ENCODE measurements at regions of chr9 and their contacts with region 1.

Region 1: DNA sequence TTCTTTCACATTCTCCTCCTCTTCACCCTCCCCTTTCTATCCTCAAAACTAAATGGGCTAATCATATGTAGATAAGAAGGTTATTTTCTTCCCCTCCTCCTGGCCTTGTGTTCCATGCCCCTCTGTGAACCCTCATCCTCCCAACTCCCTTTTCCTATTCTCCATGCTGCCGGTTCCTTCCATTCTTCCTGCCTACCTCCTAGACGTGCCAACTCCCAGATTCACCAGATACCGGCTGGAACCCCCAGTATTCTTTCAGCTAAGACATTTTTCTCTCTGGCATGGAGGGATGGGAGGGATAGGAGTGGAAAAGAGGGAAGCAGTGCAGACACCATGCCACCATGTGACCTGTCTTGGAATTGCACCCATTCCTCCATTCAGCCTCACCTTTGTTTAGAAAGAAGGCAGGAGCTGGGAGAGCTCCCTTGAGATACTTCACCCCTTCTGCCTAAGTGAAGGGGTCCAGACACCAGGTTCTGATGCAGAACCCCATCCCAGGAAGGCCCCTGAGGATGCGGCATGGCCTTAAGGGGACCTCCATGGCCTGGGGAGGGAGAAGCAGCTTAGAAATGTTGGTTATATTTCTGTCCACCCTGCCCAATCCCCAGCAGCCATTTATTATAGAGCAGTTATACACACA is 4.8 kb downstream of the DNAJB5 start:
- DNase-seq: no peak
- H3K4me3 ChIP-seq: peak overlapping the region in 1 of 2 donors; percentile 30
- H3K27ac ChIP-seq: peak overlapping the region; percentile 93 to 100
- H3K4me1 ChIP-seq: peaks cover 0 to 65% (median 50%) of the 10 kb centered on the region in 4 donors
- H3K27me3 ChIP-seq: no peaks in the 10 kb centered on the region
- CTCF ChIP-seq: peak; percentile 41 to 59

Region 2: DNA sequence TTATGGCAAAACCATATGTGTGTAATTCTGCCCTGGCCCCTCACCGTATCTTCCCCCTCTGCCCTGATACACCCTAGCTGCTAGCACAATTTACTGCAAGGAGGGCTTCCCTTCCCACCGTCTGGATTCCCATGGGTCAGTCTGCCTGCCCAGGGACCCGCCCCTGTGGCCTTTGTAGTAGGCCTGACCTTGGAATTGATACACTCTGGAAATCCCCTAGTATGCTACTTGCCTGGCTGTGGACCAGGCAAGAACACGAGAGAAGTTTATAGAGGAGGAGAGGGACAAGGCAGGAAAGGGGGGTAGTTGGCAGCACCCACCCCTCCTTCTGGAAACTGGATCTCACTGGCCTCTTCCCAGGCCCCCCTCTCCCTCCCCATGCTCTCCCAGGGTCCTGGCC is 168.6 kb before region 1 on chr9:
- intact Hi-C with region 1: no loop called
- DNase-seq: no peak
- H3K4me3 ChIP-seq: no peak overlapping the region
- H3K27ac ChIP-seq: no peak overlapping the region
- H3K4me1 ChIP-seq: no peaks in the 10 kb centered on the region
- H3K27me3 ChIP-seq: peaks cover 0 to 4% of the 10 kb centered on the region in 2 donors
- CTCF ChIP-seq: no peak

Region 3: DNA sequence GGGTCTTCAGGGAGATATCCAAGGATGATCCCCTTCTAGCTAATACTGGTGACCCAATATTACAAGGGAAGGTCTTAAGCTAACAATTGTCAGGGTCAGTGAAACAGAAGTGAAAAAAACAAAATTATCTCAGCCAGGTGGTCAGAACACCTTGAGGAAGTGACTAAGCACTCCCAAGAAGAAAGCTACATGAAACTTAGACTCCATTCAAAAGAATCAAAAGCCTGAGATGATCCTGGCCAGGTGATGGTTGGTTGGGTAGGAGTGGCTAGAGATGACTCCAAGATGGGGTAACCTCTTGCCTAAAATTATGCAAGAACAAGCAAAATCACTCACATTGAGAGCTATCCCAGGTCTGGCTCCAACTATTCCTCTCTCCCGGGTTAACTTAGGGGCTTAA is 72.7 kb after region 1 on chr9:
- intact Hi-C with region 1: loop called (anchors 5 kb)
- DNase-seq: peak in 1 of 2 donors; percentile 2
- H3K4me3 ChIP-seq: no peak overlapping the region
- H3K27ac ChIP-seq: no peak overlapping the region
- H3K4me1 ChIP-seq: peaks cover 0 to 42% (median 32%) of the 10 kb centered on the region in 4 donors
- H3K27me3 ChIP-seq: no peaks in the 10 kb centered on the region
- CTCF ChIP-seq: no peak

Region 4: DNA sequence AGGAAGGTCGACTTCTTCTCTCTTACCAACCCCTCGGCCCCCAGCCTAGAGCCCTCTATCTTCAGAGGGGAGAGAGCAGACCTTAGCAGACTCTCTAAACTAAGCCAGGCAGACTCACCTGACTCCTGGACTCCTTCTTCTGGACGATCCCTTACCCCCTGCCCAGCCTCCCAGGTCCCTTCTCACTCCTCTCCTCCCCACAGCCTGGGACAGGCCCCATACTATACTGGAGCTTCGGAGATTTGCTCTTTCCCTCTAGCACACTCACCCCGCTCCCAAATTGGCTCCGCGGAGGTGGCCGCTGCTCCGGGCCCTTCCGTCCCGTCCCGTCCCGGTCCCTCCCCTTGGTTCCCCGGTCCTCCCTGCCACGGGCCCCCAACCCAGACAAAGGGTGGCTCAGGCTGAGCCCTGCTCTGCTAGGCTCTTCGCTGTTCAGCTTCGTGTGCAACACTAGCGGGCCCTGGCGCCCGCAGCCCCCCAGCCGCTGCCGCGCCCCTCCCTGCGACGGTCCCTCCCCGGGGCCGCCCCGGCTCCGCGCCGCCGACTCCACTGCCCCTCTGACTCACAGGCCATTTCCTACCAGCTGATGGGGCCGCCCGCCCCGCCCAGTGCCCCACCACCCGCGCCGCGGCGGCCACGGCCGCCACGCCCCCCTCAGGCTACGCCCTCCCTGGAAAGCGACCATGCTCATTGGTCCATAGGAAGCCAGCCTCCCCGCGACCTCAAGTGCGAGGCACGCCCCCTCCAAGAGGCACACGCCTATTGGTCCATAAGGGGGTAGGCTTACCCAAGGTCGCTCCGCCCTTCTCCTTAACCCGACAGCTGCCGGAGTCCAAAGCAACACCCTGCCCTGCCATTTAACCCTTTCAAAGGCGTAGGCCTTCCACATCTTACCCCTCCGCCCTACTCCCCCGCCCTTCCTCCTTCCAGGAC is 116.9 kb after region 1 on chr9:
- intact Hi-C with region 1: loop called (anchors 5 kb)
- DNase-seq: peak; percentile 99
- H3K4me3 ChIP-seq: peak overlapping the region; percentile 79 to 87
- H3K27ac ChIP-seq: peak overlapping the region; percentile 97 to 100
- H3K4me1 ChIP-seq: peaks cover 4 to 67% (median 53%) of the 10 kb centered on the region in 4 donors
- H3K27me3 ChIP-seq: no peaks in the 10 kb centered on the region
- CTCF ChIP-seq: no peak

Measured in tibial artery (tissue), 4 donors.